ENCODE measurements at regions of chr20 and their contacts with region 1.

Region 1: GRCh38 chr20:1810926-1811620 is 84.1 kb upstream of the SIRPA start:
- DNase-seq: peak; percentile 75
- H3K4me3 ChIP-seq: no peak overlapping the region
- H3K27ac ChIP-seq: peak overlapping the region; percentile 79
- H3K4me1 ChIP-seq: peaks cover 56% of the 10 kb centered on the region
- H3K27me3 ChIP-seq: no peaks in the 10 kb centered on the region
- CTCF ChIP-seq: no peak
- POLR2A ChIP-seq: no peak

Region 2: DNA sequence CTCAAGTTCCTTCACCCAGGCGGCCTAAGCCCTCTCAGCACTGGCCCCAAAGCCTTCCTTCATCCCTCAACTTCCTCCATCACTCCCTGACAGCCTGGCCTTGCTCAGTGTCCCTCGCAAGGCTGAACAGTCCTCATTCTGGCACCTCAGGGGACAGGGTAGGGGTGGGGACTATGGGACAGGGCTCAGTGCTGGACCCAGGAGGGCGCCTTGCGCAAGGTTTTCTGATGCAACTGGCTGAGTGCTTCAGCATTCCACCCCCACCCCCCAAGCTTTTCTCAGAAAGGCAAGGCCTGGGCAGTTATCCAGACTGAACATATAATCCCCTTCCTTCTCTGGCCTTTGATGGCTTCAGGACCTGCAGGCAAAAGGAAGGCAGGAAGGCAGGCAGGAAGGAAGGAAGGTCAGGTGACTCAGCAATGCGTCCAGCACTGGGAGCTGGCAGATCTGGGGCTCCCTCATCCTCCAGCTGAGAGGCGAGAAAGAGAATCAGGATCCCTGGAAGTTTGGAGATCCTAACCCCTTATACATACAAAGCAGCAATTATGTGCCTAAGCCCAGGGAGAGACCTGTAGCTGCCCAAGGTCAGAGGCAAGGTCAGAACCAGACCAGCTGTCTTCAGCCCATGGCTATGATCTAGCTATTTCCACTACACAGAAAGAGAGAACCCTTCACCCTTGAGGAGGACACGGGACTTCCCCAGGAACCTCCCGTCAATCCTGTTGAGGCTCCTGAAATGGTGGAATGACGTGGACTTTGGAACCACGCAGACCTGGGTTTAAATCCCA is 1439.1 kb before region 1 on chr20:
- CTCF ChIA-PET with region 1: no interaction called
- POLR2A ChIA-PET with region 1: no interaction called
- dilution Hi-C with region 1: no loop called
- intact Hi-C with region 1: loop called (anchors 5 kb)
- DNase-seq: peak; percentile 93
- H3K4me3 ChIP-seq: no peak overlapping the region
- H3K27ac ChIP-seq: peak overlapping the region; percentile 82
- H3K4me1 ChIP-seq: peaks cover 52% of the 10 kb centered on the region
- H3K27me3 ChIP-seq: no peaks in the 10 kb centered on the region
- CTCF ChIP-seq: no peak
- POLR2A ChIP-seq: no peak

Region 3: GRCh38 chr20:1830240-1830639 is 19.2 kb after region 1 on chr20:
- CTCF ChIA-PET with region 1: interaction called, 23 read pairs
- POLR2A ChIA-PET with region 1: no interaction called
- dilution Hi-C with region 1: no loop called
- intact Hi-C with region 1: loop called (anchors 2 kb)
- DNase-seq: no peak
- H3K4me3 ChIP-seq: no peak overlapping the region
- H3K27ac ChIP-seq: no peak overlapping the region
- H3K4me1 ChIP-seq: peaks cover 16% of the 10 kb centered on the region
- H3K27me3 ChIP-seq: peaks cover 7 to 17% of the 10 kb centered on the region in 2 experiments
- CTCF ChIP-seq: no peak
- POLR2A ChIP-seq: no peak

Region 4: DNA sequence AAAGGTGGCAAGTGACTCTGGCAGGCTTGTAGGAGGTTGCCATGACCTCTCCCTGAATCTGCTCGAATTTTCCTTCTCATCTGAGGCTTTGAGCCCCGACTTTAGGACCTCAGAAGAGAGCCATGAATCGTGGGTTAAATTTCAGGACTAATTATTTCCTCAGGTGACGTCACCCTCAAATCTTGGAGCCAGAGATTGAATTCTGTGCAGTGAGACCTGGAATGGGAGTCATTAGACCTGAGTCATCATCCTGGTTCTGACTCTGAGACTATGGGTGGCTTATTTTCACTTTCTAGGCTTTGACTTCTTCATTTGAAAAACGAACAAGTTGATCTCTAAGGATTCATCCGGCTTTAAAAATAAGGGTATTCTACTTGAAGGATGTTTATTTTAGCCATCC is 231.3 kb after region 1 on chr20:
- CTCF ChIA-PET with region 1: no interaction called
- POLR2A ChIA-PET with region 1: no interaction called
- dilution Hi-C with region 1: no loop called
- intact Hi-C with region 1: no loop called
- DNase-seq: no peak
- H3K4me3 ChIP-seq: no peak overlapping the region
- H3K27ac ChIP-seq: no peak overlapping the region
- H3K4me1 ChIP-seq: no peaks in the 10 kb centered on the region
- H3K27me3 ChIP-seq: peaks cover 4 to 7% of the 10 kb centered on the region in 2 experiments
- CTCF ChIP-seq: no peak
- POLR2A ChIP-seq: no peak

Measured in endothelial cell of umbilical vein (primary cell).